Mammary epithelial cell (primary cell): ENCODE measurements at regions of chr12 and their contacts with region 1.

Region 1: GRCh38 chr12:113005754-113006153 is 27.4 kb downstream of the OAS2 start:
- DNase-seq: no peak
- H3K4me3 ChIP-seq: no peak overlapping the region
- H3K27ac ChIP-seq: no peak overlapping the region
- H3K4me1 ChIP-seq: peaks cover 14% of the 10 kb centered on the region
- H3K27me3 ChIP-seq: no peaks in the 10 kb centered on the region
- CTCF ChIP-seq: peak; percentile 28 to 41

Region 2: GRCh38 chr12:112961074-112961473 is 44.7 kb before region 1 on chr12:
- CTCF ChIA-PET with region 1: no interaction called
- dilution Hi-C with region 1: no loop called
- in situ Hi-C with region 1: no loop called
- intact Hi-C with region 1: no loop called
- DNase-seq: no peak
- H3K4me3 ChIP-seq: no peak overlapping the region
- H3K27ac ChIP-seq: no peak overlapping the region
- H3K4me1 ChIP-seq: no peaks in the 10 kb centered on the region
- H3K27me3 ChIP-seq: no peaks in the 10 kb centered on the region
- CTCF ChIP-seq: no peak

Region 3: DNA sequence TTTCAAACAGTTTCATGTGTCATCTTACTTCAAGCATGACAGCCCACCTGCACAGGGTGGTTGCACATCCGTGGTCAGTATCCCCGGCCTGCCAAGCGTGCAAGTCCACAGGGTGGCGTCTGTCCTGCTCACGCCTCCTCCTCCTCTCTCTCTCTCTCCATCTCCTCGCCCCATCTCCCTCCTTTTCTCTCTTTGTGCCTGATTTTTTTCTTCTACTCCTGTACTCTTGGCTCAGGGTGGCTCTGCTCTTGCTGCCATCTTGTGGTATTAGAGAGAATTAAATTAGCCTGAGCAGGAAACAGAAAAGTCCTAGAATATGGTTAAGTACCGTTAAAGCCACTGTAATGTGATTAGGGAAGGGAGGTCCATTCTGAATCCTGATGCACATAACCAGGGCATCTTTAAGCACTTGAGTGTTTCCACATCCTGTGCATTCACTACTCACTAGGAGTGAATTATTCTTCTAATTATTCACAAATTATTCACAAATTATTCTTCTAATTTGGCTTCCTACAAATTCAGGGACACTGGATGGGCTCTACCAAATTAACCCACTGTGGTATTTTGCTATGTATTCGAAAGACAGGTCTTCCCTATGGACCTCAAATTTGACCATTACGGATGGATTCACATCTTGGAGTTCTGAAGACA is 25.2 kb after region 1 on chr12:
- CTCF ChIA-PET with region 1: no interaction called
- dilution Hi-C with region 1: no loop called
- in situ Hi-C with region 1: no loop called
- intact Hi-C with region 1: loop called (anchors 1 kb)
- DNase-seq: peak; percentile 66
- H3K4me3 ChIP-seq: no peak overlapping the region
- H3K27ac ChIP-seq: no peak overlapping the region
- H3K4me1 ChIP-seq: peaks cover 3% of the 10 kb centered on the region
- H3K27me3 ChIP-seq: no peaks in the 10 kb centered on the region
- CTCF ChIP-seq: peak; percentile 56 to 68

Region 4: DNA sequence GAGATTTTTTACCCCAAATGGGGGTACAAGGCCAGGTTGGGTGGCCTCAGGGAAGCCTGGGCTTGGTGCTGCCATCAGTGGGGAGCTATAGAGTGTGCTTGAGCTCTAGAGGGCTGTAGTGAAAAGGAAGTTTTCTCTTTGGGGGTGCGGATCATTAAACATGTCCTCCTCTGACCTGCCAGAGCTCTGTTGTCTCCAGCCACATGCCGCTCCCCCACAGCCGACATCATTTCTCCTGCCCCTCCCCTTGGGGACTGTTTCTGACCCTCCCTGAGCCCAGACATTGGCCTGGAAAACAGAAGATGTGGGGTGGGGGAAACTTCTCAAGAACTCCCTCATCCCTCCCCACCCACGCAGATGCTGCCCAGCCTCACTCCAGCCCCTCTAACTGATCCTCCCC is 76.1 kb after region 1 on chr12:
- CTCF ChIA-PET with region 1: interaction called, 26 read pairs
- dilution Hi-C with region 1: no loop called
- in situ Hi-C with region 1: no loop called
- intact Hi-C with region 1: no loop called
- DNase-seq: no peak
- H3K4me3 ChIP-seq: no peak overlapping the region
- H3K27ac ChIP-seq: no peak overlapping the region
- H3K4me1 ChIP-seq: no peaks in the 10 kb centered on the region
- H3K27me3 ChIP-seq: peaks cover under 1% of the 10 kb centered on the region
- CTCF ChIP-seq: no peak

Region 5: GRCh38 chr12:113221181-113221997 is 215.6 kb after region 1 on chr12 and contains the start of gene TPCN1:
- CTCF ChIA-PET with region 1: no interaction called
- dilution Hi-C with region 1: no loop called
- in situ Hi-C with region 1: no loop called
- intact Hi-C with region 1: no loop called
- DNase-seq: peak; percentile 100
- H3K4me3 ChIP-seq: peak within 1 kb of the TSS; percentile 61 to 85 (median 83)
- H3K27ac ChIP-seq: peak within 1 kb of the TSS; percentile 76
- H3K4me1 ChIP-seq: peaks cover 16% of the 10 kb centered on the region
- H3K27me3 ChIP-seq: no peaks in the 10 kb centered on the region
- CTCF ChIP-seq: no peak
- total RNA-seq, gene TPCN1: 10.7 to 62.3 TPM